Naive thymus-derived CD4-positive, alpha-beta T cell (primary cell): ENCODE measurements at regions of chr6 and their contacts with region 1.

Region 1: GRCh38 chr6:506508-506907 is 115.0 kb downstream of the IRF4 start:
- DNase-seq: peak in 1 of 9 donors; percentile 35
- ATAC-seq: no peak
- H3K4me3 ChIP-seq: no peak overlapping the region
- H3K4me3 Mint-ChIP-seq: peak overlapping the region in 7 of 10 donors; percentile 25 to 61 (median 30)
- H3K27ac ChIP-seq: peak overlapping the region; percentile 5
- H3K27ac Mint-ChIP-seq: peak overlapping the region; percentile 32 to 89 (median 73)
- H3K4me1 ChIP-seq: peaks cover 21 to 42% of the 10 kb centered on the region in 2 donors
- H3K4me1 Mint-ChIP-seq: peaks cover 51 to 95% (median 85%) of the 10 kb centered on the region in 7 donors
- H3K27me3 ChIP-seq: no peaks in the 10 kb centered on the region
- H3K27me3 Mint-ChIP-seq: no peaks in the 10 kb centered on the region

Region 2: DNA sequence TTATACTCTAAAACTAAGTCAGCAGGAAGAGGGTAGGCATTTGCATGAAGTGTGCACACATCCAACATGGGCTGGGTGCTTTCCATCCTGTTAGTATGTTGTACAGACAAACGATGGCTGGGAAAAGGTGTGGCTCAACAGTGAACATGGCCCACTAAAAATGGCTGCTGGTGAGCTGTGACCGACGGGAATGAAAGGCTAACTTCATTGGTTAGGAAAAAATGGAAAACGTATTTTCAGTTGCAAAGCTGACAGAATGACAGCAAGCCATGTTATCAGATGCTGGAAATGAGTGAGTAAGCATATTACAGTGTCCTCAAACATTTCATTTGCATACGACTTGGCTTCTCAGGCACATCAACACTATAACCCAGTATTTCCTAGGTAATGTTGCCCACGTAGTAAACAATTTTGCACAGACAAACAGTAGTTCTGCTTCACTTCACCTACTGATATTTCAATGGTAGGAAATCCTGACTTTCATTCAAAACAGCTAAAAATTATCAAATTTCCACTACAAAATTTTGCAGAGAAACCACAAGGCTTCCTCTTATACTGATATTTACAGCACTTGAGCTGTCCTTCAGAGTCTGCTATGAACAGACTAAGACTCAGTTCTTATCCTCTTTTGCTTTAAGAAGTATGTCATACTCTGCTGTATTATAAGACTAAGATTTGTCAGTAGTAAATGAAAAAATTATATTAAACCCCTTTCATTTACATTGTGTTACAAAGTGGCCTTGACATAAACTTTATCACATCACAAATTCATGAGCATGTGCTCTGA is 16.1 kb before region 1 on chr6:
- CTCF ChIA-PET with region 1: no interaction called
- POLR2A ChIA-PET with region 1: interaction called, 7 read pairs
- intact Hi-C with region 1: loop called (anchors 2 kb)
- DNase-seq: no peak
- ATAC-seq: peak; percentile 47
- H3K4me3 ChIP-seq: peak overlapping the region; percentile 25
- H3K4me3 Mint-ChIP-seq: peak overlapping the region; percentile 19 to 87 (median 70)
- H3K27ac ChIP-seq: no peak overlapping the region
- H3K27ac Mint-ChIP-seq: peak overlapping the region; percentile 54 to 98 (median 84)
- H3K4me1 ChIP-seq: peaks cover 60 to 65% of the 10 kb centered on the region in 2 donors
- H3K4me1 Mint-ChIP-seq: peaks cover 46 to 78% (median 70%) of the 10 kb centered on the region in 7 donors
- H3K27me3 ChIP-seq: no peaks in the 10 kb centered on the region
- H3K27me3 Mint-ChIP-seq: no peaks in the 10 kb centered on the region

Region 3: GRCh38 chr6:524803-525202 is 18.3 kb after region 1 on chr6:
- CTCF ChIA-PET with region 1: no interaction called
- POLR2A ChIA-PET with region 1: interaction called, 3 read pairs
- intact Hi-C with region 1: loop called in 1 of 2 experiments (anchors 2 kb)
- DNase-seq: peak in 2 of 9 donors; percentile 15 to 16
- ATAC-seq: peak; percentile 41
- H3K4me3 ChIP-seq: no peak overlapping the region
- H3K4me3 Mint-ChIP-seq: no peak overlapping the region
- H3K27ac ChIP-seq: no peak overlapping the region
- H3K27ac Mint-ChIP-seq: peak overlapping the region in 6 of 9 donors; percentile 15 to 90 (median 48)
- H3K4me1 ChIP-seq: no peaks in the 10 kb centered on the region
- H3K4me1 Mint-ChIP-seq: peaks cover 5 to 19% (median 13%) of the 10 kb centered on the region in 7 donors
- H3K27me3 ChIP-seq: no peaks in the 10 kb centered on the region
- H3K27me3 Mint-ChIP-seq: no peaks in the 10 kb centered on the region